Heart right ventricle (tissue), 16 donors: ENCODE measurements at regions of chr2 and their contacts with region 1.

Region 1: DNA sequence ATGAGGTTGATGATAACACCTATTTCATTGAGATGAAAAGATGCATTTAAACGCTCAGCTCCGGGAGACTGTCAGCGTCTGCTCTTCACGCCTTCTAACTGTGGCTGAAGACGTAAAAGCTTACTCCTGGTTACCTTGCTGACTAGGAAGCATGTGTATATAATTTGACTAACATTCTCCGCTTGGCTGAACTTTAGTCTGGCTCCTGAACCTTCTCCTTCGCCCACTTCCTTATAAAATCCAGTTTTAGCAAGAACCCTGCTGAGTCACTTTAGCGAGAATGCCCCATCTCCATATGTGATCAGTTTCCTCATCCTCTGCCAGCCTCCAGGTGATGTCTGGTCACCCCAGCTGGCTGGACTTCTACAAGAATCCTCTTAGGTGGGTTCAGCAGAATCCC is 12.7 kb upstream of the CREG2 start:
- DNase-seq: no peak
- ATAC-seq: no peak
- H3K4me3 ChIP-seq: no peak overlapping the region
- H3K27ac ChIP-seq: no peak overlapping the region
- H3K4me1 ChIP-seq: peaks cover 0 to 18% (median 0%) of the 10 kb centered on the region in 9 donors
- H3K27me3 ChIP-seq: peaks cover 0 to 14% (median 0%) of the 10 kb centered on the region in 7 donors
- CTCF ChIP-seq: no peak

Region 2: DNA sequence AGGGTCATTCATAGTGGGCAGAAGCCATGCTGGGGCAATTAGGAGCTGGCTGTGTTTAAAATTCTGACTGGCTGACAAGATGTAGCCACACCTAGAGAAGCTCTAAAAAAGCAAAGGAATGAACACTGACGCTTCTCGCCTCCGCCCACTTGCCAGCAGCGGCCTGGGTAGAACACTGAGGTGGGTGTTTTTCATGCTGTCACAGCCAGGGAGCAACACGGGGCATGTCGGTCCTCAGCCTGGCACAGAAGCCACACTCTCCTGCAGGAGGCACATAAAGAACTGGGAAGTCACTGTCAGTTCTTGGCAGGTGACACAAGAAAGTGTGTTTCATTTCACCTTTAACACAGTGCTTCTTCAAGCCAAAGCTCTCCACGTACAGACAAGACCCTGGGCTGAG is 992.9 kb before region 1 on chr2:
- intact Hi-C with region 1: loop called in 1 of 10 experiments (anchors 5 kb)
- DNase-seq: no peak
- ATAC-seq: peak in 7 of 8 donors; percentile 22 to 76 (median 50)
- H3K4me3 ChIP-seq: no peak overlapping the region
- H3K27ac ChIP-seq: peak overlapping the region in 4 of 10 donors; percentile 15 to 52 (median 45)
- H3K4me1 ChIP-seq: peaks cover 0 to 20% (median 8%) of the 10 kb centered on the region in 9 donors
- H3K27me3 ChIP-seq: no peaks in the 10 kb centered on the region
- CTCF ChIP-seq: no peak

Region 3: GRCh38 chr2:101205521-101205998 is 194.5 kb before region 1 on chr2:
- intact Hi-C with region 1: no loop called
- DNase-seq: peak in 1 of 2 donors; percentile 55
- ATAC-seq: peak; percentile 79 to 92 (median 88)
- H3K4me3 ChIP-seq: peak overlapping the region in 8 of 10 donors; percentile 1 to 38 (median 30)
- H3K27ac ChIP-seq: peak overlapping the region in 1 of 10 donors; percentile 65
- H3K4me1 ChIP-seq: peaks cover 0 to 16% (median 0%) of the 10 kb centered on the region in 9 donors
- H3K27me3 ChIP-seq: no peaks in the 10 kb centered on the region
- CTCF ChIP-seq: peak; percentile 13 to 69 (median 56)